Activated T-helper 2 cell treated with anti-CD3 and anti-CD28 coated beads, Interferon-gamma antibody, Interleukin-2, Interleukin-4, amounts not matched to agents 10 μg/mL and 5 μg/mL and 100 μg/mL, durations not matched to agents 14 hours and 24 hours and 36 hours (primary cell): ENCODE measurements at regions of chr3 and their contacts with region 1.

Region 1: GRCh38 chr3:24680214-24680967 is 185.7 kb upstream of the THRB start:
- DNase-seq: peak; percentile 26
- H3K4me3 Mint-ChIP-seq: no peak overlapping the region
- H3K27ac Mint-ChIP-seq: no peak overlapping the region
- H3K4me1 Mint-ChIP-seq: peaks cover 18% of the 10 kb centered on the region
- H3K27me3 Mint-ChIP-seq: peaks cover 58% of the 10 kb centered on the region

Region 2: DNA sequence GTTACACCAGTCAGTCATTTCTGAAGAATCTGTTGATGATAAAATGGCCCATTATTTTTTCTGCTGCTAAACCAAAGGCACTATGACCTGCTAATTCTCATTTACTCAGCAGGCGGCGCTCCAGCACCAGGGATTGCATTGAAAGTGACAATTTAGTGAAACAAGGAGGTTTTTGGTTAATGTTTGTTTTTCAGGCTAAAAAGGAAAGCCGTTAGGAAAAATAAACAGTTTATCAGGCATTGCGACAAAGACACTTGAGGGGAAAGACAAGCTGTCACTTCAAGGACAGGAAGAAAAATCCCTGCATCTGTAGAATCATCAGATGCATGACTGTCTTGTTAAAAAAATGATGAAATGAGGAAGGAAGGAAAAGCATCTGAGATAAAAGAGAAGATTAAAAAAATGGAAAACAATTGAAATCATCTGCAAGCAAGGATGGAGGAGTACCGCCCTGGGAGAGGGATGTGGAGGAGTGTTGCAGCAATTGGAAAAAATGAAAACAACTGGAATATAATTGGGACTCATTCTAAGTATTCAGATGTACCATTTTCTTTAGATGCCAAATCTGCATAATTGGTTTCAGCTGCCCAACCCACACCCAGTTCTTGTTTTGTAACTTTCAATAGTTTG is 681.3 kb before region 1 on chr3:
- intact Hi-C with region 1: loop called (anchors 2 kb)
- DNase-seq: peak; percentile 28
- H3K4me3 Mint-ChIP-seq: no peak overlapping the region
- H3K27ac Mint-ChIP-seq: no peak overlapping the region
- H3K4me1 Mint-ChIP-seq: peaks cover 4% of the 10 kb centered on the region
- H3K27me3 Mint-ChIP-seq: peaks cover 10% of the 10 kb centered on the region

Region 3: DNA sequence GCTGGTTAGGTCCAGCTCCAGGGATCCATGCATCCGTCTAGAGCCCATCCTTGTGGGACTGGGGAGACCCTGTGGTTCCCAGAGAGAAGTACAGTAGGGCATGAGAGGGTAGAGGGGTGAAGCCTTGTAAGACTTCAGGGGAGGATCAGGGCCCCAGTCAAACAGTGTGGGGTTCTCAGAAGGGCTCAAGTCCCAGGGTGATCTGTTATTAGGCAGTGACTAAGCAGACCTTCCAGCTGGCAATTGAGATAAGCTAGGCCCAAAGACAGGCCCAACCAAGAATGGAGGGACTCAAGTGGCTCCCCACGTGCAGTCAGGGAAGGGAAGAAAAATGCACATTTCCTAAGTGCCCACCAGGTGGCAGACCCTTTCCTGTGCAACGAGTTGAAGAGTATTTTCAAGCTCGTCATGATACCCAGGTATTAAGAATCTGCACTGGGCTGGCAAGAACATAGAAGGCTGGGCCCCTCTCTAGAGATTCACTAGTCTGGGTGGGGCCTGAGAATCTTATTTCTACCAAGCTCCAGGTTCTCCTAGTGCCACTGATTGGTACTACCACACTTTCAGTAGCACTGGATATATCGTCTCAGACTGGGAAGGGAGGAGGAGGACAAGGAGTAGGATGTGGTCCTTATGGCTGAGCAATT is 494.5 kb before region 1 on chr3:
- intact Hi-C with region 1: loop called (anchors 2 kb)
- DNase-seq: no peak
- H3K4me3 Mint-ChIP-seq: no peak overlapping the region
- H3K27ac Mint-ChIP-seq: no peak overlapping the region
- H3K4me1 Mint-ChIP-seq: no peaks in the 10 kb centered on the region
- H3K27me3 Mint-ChIP-seq: no peaks in the 10 kb centered on the region

Region 4: DNA sequence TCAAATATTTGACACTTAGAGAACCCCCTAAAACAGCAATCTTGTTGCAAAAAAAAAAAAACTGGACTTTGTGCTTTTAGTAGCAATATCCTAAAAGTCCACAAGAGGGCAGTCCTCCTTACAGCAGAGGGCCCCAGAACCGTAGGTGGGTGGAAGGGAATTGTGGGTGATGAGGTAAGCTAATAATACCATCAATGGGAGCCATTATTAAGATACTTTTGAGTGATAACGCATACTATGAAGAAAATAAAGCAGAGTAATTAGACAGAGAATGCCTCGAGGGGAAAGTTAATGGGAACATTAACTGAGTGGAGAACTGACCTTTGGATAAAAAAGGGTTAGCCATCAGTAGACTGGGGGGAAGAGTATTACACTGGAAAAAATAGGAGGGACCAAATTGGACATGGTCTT is 415.6 kb before region 1 on chr3:
- intact Hi-C with region 1: loop called (anchors 2 kb)
- DNase-seq: no peak
- H3K4me3 Mint-ChIP-seq: no peak overlapping the region
- H3K27ac Mint-ChIP-seq: no peak overlapping the region
- H3K4me1 Mint-ChIP-seq: no peaks in the 10 kb centered on the region
- H3K27me3 Mint-ChIP-seq: peaks cover 10% of the 10 kb centered on the region

Region 5: GRCh38 chr3:24343084-24343783 is 337.2 kb before region 1 on chr3:
- intact Hi-C with region 1: loop called (anchors 10 kb)
- DNase-seq: no peak
- H3K4me3 Mint-ChIP-seq: no peak overlapping the region
- H3K27ac Mint-ChIP-seq: no peak overlapping the region
- H3K4me1 Mint-ChIP-seq: peaks cover 2% of the 10 kb centered on the region
- H3K27me3 Mint-ChIP-seq: peaks cover 3% of the 10 kb centered on the region

Region 6: GRCh38 chr3:24494618-24495325 is 185.6 kb before region 1 on chr3 and contains the start of gene THRB:
- intact Hi-C with region 1: loop called (anchors 10 kb)
- DNase-seq: no peak
- H3K4me3 Mint-ChIP-seq: no peak within 1 kb of the TSS
- H3K27ac Mint-ChIP-seq: peak within 1 kb of the TSS; percentile 46
- H3K4me1 Mint-ChIP-seq: peaks cover 2% of the 10 kb centered on the region
- H3K27me3 Mint-ChIP-seq: peaks cover 52% of the 10 kb centered on the region
- total RNA-seq, gene THRB: not detected in 2 replicates

Region 7: DNA sequence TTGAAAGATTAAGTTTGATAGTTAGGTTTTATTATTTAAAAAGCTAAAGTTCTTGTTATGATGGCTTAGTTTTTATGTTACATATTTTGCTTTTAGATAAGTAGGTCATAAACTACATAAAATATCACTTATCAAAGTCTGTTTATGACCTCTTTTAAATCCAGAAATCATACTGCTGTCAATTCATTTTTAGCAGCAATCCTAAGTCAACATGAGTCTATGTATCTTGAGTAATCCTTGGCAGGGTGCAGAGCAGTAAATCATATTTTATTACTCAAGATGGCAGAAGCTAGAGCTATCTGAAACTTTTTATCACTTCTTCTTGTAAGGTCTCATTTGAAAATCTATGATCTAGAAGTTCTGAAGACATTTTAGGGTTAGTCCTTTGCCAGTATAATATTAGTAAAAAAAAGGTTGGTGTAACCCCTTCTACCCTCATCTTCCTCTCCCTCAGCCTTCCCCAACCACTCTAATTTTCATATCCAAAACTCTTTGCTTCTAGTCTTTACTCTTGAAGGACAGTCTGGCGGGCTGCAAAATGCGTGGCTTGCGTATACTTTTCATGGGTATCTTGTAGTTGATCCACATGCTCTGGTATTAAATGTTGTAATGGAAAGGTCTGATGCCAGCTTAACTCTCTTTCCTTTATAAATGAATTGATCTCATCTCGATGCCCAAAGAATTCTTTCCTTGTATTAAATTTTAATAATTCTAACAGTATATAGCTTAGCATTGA is 51.7 kb before region 1 on chr3:
- intact Hi-C with region 1: no loop called
- DNase-seq: no peak
- H3K4me3 Mint-ChIP-seq: no peak overlapping the region
- H3K27ac Mint-ChIP-seq: no peak overlapping the region
- H3K4me1 Mint-ChIP-seq: no peaks in the 10 kb centered on the region
- H3K27me3 Mint-ChIP-seq: no peaks in the 10 kb centered on the region

Region 8: DNA sequence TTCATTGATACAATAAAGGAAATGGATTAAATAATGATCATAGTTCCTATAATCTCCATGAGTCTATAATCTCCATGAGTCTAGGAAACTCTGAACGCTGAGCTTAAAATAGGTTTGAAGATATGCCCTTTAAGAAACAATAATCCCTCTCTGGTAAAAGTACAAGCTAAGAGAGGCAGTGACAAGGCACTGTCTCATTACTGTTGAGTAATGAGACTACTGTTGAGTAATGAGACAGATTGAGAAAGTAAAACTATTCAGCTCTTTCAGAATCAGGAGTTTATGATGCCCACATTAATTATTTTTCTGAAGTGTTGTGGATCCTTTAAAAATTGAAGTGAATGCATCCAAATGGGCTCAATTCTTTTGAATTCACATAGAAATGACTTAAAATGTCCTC is 49.8 kb after region 1 on chr3:
- intact Hi-C with region 1: no loop called
- DNase-seq: no peak
- H3K4me3 Mint-ChIP-seq: no peak overlapping the region
- H3K27ac Mint-ChIP-seq: no peak overlapping the region
- H3K4me1 Mint-ChIP-seq: no peaks in the 10 kb centered on the region
- H3K27me3 Mint-ChIP-seq: no peaks in the 10 kb centered on the region